HCT116 (cell line): ENCODE measurements at regions of chr10 and their contacts with region 1.

Region 1: DNA sequence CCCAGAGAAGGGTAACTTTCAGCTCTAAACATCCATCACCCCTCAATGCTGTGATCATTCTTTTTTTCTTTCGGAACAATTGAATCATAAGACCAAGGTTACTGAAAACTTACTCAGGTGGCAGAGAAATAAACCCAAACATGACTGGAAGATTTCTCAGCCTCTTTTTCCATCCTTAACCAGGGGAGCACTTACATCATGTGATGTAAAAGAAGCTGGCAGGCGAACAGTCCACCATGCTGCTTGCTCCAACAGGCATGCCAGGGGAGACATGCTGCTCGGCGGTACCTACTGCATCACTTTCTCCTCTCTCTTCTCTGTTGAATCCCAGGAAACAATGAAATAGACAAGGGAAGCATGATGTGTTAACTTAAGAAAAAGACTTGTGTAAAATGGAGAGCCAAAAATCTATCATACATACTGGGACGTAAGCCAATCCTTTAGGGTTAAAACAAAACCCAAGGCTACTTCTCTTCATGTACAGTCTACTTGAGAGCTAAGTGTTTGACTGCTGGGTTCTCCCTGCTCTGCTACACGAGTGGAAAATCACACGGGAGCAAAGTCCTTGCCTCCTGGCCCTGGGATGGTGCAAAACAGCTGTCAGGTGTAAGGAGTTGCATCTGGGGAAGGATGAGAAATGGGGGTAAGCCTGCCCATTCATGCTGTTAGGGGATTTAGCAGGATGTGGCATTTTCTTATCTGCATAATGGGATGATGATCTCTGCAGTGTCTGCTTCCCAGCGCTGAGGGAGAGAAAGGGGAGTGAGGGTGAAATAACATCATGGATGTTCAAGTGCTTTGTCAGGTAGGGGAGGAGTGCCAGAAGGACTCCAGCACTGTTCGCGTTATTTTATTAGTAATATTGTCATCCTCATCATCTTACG is 64.3 kb upstream of the ZNF438 start:
- DNase-seq: no peak
- ATAC-seq: no peak
- H3K4me3 ChIP-seq: no peak overlapping the region
- H3K27ac ChIP-seq: no peak overlapping the region
- H3K4me1 ChIP-seq: peaks cover 16 to 20% of the 10 kb centered on the region in 2 experiments
- H3K27me3 ChIP-seq: no peaks in the 10 kb centered on the region
- CTCF ChIP-seq: no peak
- POLR2A ChIP-seq: no peak
- RAD21 ChIP-seq: no peak

Region 2: DNA sequence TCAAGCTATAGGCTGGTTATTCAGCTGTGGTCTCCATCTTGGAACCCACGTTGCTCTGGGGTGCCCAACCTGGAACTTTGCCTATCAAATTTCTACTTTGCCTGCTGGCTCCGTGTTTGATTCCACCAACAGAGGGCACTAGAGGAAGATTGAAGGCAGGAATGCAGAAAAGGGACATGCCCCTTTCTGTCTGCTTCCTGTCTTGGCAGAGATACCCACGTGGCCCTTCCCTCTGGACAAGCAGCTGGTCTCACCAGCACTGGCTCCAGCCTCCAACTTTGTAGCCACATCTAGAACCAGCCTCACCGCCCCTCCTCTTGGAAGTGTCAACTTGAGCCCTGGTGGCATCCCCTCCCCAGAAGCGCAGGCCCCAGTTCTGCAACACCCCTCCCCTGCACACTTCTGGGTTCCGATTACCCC is 12.1 kb before region 1 on chr10:
- CTCF ChIA-PET with region 1: interaction called, 12 read pairs
- POLR2A ChIA-PET with region 1: no interaction called
- RAD21 ChIA-PET with region 1: interaction called in 1 of 2 experiments, 5 read pairs
- intact Hi-C with region 1: no loop called
- DNase-seq: peak; percentile 72
- ATAC-seq: peak; percentile 97
- H3K4me3 ChIP-seq: no peak overlapping the region
- H3K27ac ChIP-seq: no peak overlapping the region
- H3K4me1 ChIP-seq: peaks cover 0 to 7% of the 10 kb centered on the region in 2 experiments; a peak in 3 of 4 replicates
- H3K27me3 ChIP-seq: no peaks in the 10 kb centered on the region
- CTCF ChIP-seq: peak; percentile 52 to 79 (median 74)
- POLR2A ChIP-seq: no peak
- RAD21 ChIP-seq: peak; percentile 83